ENCODE measurements at regions of chr9 and their contacts with region 1.

Region 1: DNA sequence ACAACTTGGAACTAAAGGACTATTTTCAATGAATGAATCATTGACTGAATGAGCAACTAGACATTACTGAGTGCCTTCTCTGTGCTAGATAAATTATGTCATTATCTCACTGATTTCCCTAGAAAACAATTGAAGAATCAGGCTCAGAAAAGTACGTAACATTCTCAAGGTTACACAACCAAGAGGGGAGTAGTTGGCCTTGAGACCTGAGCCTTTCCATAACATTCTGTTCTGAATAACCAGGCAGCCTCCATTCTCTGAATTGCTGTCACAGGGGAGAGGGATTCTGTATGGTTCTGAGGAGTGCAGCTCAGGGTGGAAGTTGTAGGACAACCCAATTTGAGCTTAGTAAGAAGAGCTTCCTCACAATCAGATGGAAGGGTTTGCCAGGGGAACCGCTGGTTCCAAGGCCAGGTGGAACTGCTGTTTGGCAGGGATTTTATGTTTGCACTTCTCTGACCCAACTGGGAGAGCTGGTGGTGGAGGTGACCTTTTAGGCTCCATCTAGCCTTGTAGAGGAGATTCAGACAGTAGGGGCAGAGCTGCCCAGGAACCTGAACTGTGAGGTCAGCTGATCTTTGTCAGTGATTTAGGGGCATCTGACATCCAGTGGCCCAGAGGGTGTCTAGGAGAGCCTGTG is 16.3 kb downstream of the POLR1E start:
- DNase-seq: no peak
- H3K4me3 ChIP-seq: no peak overlapping the region
- H3K27ac ChIP-seq: no peak overlapping the region
- H3K4me1 ChIP-seq: no peaks in the 10 kb centered on the region
- H3K27me3 ChIP-seq: no peaks in the 10 kb centered on the region
- CTCF ChIP-seq: no peak

Region 2: GRCh38 chr9:37963936-37964739 is 462.1 kb after region 1 on chr9:
- CTCF ChIA-PET with region 1: no interaction called
- POLR2A ChIA-PET with region 1: interaction called, 13 read pairs
- intact Hi-C with region 1: no loop called
- DNase-seq: peak; percentile 60 to 85
- H3K4me3 ChIP-seq: peak overlapping the region; percentile 4; the same call in 1 of the 2 replicates
- H3K27ac ChIP-seq: peak overlapping the region; percentile 87
- H3K4me1 ChIP-seq: peaks cover 61% of the 10 kb centered on the region
- H3K27me3 ChIP-seq: no peaks in the 10 kb centered on the region
- CTCF ChIP-seq: no peak